ENCODE measurements at regions of chr17 and their contacts with region 1.

Region 1: DNA sequence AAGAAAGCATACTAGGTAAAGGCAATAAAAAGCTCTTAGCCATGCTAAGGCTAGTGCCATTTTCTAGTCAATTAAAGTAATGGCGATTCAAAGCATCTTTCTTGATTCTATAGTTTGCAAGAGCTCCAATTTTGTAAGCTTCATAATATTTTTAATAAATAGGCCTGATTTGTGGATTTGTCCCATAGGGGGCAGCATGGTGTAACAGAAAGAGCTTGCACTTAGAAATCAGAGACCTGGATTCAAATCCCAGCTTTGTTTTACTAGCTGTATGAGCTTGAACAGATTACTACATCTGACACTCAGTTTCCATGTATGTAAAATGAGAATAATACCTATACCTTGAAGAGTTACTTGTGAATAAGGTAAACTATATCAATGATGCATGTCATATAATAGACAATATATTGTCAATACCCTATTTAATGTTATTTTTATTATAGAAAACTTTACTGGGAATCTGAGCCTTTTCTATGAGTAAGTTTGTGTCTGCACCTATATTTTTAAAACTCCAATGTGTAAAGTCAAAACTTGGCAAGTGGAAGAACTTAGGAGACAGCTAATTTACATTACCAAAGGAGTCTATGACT is 93.6 kb upstream of the NOG start:
- DNase-seq: peak; percentile 57
- ATAC-seq: peak; percentile 54
- H3K4me3 ChIP-seq: no peak overlapping the region
- H3K27ac ChIP-seq: no peak overlapping the region
- H3K4me1 ChIP-seq: no peaks in the 10 kb centered on the region
- H3K27me3 ChIP-seq: peaks cover 35% of the 10 kb centered on the region
- CTCF ChIP-seq: peak; percentile 72 to 80 (median 78)
- POLR2A ChIP-seq: no peak
- RAD21 ChIP-seq: peak; percentile 79

Region 2: GRCh38 chr17:55567240-55568214 is 932.4 kb before region 1 on chr17:
- CTCF ChIA-PET with region 1: no interaction called
- POLR2A ChIA-PET with region 1: no interaction called
- RAD21 ChIA-PET with region 1: no interaction called
- intact Hi-C with region 1: no loop called
- DNase-seq: no peak
- ATAC-seq: no peak
- H3K4me3 ChIP-seq: no peak overlapping the region
- H3K27ac ChIP-seq: no peak overlapping the region
- H3K4me1 ChIP-seq: no peaks in the 10 kb centered on the region
- H3K27me3 ChIP-seq: peaks cover 56% of the 10 kb centered on the region
- CTCF ChIP-seq: no peak
- POLR2A ChIP-seq: no peak
- RAD21 ChIP-seq: no peak

Region 3: DNA sequence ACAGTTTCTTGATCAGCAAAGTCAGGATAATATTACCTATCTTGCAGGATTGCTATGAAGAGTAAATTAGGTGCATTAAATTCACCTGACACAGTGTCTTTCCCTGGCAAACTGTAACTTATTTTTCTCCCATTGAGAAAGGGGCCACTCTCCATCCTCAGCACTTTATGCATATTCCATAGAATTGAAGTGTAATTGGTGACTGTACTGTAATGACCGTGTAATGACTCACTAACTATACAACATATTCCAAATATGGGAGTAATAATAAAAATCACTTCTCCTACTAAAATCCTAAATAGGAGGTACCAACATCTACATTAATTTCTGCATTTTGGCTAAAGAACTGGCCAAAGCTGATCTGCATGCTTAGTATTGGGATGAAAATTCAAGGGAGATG is 48.3 kb before region 1 on chr17:
- CTCF ChIA-PET with region 1: no interaction called
- POLR2A ChIA-PET with region 1: no interaction called
- RAD21 ChIA-PET with region 1: no interaction called
- intact Hi-C with region 1: no loop called
- DNase-seq: no peak
- ATAC-seq: no peak
- H3K4me3 ChIP-seq: no peak overlapping the region
- H3K27ac ChIP-seq: no peak overlapping the region
- H3K4me1 ChIP-seq: no peaks in the 10 kb centered on the region
- H3K27me3 ChIP-seq: peaks cover 46% of the 10 kb centered on the region
- CTCF ChIP-seq: no peak
- POLR2A ChIP-seq: no peak
- RAD21 ChIP-seq: no peak

Region 4: DNA sequence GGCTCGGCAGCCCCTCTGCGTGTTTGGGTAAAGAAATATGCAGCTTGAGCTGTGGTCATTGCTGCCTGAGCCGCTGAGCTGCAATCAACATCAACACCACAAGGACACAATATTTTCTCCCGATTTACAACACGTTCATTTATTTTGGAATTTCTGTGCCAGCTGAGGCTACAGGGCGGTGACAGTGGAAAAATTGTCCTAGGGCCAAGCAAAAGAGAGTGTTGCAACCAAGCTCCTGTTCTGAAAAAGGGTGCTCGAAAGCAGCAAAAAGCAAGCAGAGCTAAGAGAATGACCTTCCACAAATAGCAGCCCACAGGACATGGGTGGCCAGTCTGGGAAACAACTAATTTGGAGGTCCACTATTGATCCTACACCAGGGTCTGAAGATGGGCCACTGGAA is 58.2 kb after region 1 on chr17:
- CTCF ChIA-PET with region 1: interaction called, 11 read pairs
- POLR2A ChIA-PET with region 1: no interaction called
- RAD21 ChIA-PET with region 1: no interaction called
- intact Hi-C with region 1: no loop called
- DNase-seq: no peak
- ATAC-seq: no peak
- H3K4me3 ChIP-seq: no peak overlapping the region
- H3K27ac ChIP-seq: no peak overlapping the region
- H3K4me1 ChIP-seq: no peaks in the 10 kb centered on the region
- H3K27me3 ChIP-seq: peaks cover 15% of the 10 kb centered on the region
- CTCF ChIP-seq: no peak
- POLR2A ChIP-seq: no peak
- RAD21 ChIP-seq: no peak

Region 5: GRCh38 chr17:56653877-56654276 is 154.0 kb after region 1 on chr17:
- CTCF ChIA-PET with region 1: interaction called, 12 read pairs
- POLR2A ChIA-PET with region 1: no interaction called
- RAD21 ChIA-PET with region 1: no interaction called
- intact Hi-C with region 1: no loop called
- DNase-seq: peak; percentile 63
- ATAC-seq: peak; percentile 96
- H3K4me3 ChIP-seq: no peak overlapping the region
- H3K27ac ChIP-seq: no peak overlapping the region
- H3K4me1 ChIP-seq: no peaks in the 10 kb centered on the region
- H3K27me3 ChIP-seq: no peaks in the 10 kb centered on the region
- CTCF ChIP-seq: peak; percentile 71 to 90 (median 89)
- POLR2A ChIP-seq: no peak
- RAD21 ChIP-seq: peak; percentile 72

Region 6: GRCh38 chr17:56779898-56780733 is 280.2 kb after region 1 on chr17:
- CTCF ChIA-PET with region 1: interaction called, 43 read pairs
- POLR2A ChIA-PET with region 1: no interaction called
- RAD21 ChIA-PET with region 1: interaction called, 3 to 10 read pairs
- intact Hi-C with region 1: loop called (anchors 2 kb)
- DNase-seq: peak; percentile 69
- ATAC-seq: peak; percentile 99
- H3K4me3 ChIP-seq: peak overlapping the region; percentile 31 to 49
- H3K27ac ChIP-seq: no peak overlapping the region
- H3K4me1 ChIP-seq: peaks cover 8 to 16% of the 10 kb centered on the region in 2 experiments; a peak in 3 of 4 replicates
- H3K27me3 ChIP-seq: peaks cover 5% of the 10 kb centered on the region; the same call in 1 of the 2 replicates
- CTCF ChIP-seq: peak; percentile 91 to 99 (median 99)
- POLR2A ChIP-seq: no peak
- RAD21 ChIP-seq: peak; percentile 98